Gastrocnemius medialis (tissue), 4 donors: ENCODE measurements at regions of chr1 and their contacts with region 1.

Region 1: DNA sequence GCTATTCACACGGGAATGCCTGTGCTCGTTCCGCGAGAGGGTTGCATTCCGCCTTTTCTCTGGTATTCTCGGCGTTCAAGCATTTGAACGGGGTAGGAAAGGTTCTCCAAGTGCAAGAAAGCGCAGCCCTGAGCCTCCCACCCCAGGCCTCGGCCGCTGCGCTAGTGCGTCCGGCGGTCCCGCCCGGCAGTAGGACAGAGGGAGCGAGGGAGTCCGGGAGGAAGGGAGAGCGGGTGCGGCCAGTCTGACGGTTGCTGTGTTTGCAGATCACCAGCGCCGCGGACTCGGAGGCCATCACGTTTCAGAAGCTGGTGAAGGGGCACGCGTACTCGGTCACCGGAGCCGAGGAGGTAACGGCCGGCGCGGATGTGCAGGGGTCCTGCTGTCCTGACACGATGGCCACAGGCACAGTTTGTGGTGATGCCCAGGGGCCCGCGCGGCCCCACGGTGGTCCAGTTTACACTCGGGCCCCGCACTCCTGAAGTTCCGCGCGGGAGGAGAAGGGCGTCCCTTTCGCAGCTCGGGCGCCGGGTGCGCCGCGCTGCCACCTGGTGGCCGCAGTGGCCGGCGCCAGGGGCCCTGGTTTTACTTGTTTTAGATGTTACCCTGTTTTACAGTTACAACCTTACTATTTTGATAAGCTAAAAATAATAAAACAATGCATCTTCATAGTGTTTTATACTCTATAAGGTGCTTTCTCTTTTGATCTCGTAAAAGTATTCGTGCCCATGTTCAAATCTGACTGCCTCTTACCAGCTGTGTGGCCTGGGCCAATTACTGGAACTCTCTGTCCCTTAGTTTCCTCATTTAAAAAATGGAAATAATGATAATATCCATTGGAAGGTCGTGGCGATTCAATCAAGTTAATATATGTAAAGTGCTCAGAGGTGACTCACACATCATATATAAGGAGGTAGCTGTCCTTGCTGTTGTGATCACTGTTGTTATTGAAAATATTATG is 36.7 kb downstream of the CAPN2 start:
- DNase-seq: peak; percentile 9 to 41
- ATAC-seq: peak; percentile 81 to 83
- H3K4me3 ChIP-seq: peak overlapping the region; percentile 45 to 57 (median 46)
- H3K27ac ChIP-seq: peak overlapping the region; percentile 53 to 67 (median 57)
- H3K4me1 ChIP-seq: peaks cover 6 to 12% of the 10 kb centered on the region in 2 donors
- H3K27me3 ChIP-seq: no peaks in the 10 kb centered on the region
- CTCF ChIP-seq: peak; percentile 88 to 98 (median 94)
- POLR2A ChIP-seq: no peak

Region 2: GRCh38 chr1:223645903-223646302 is 103.2 kb before region 1 on chr1:
- in situ Hi-C with region 1: no loop called
- intact Hi-C with region 1: no loop called
- DNase-seq: no peak
- ATAC-seq: no peak
- H3K4me3 ChIP-seq: no peak overlapping the region
- H3K27ac ChIP-seq: no peak overlapping the region
- H3K4me1 ChIP-seq: peaks cover 11 to 13% of the 10 kb centered on the region in 2 donors
- H3K27me3 ChIP-seq: no peaks in the 10 kb centered on the region
- CTCF ChIP-seq: no peak
- POLR2A ChIP-seq: no peak

Region 3: DNA sequence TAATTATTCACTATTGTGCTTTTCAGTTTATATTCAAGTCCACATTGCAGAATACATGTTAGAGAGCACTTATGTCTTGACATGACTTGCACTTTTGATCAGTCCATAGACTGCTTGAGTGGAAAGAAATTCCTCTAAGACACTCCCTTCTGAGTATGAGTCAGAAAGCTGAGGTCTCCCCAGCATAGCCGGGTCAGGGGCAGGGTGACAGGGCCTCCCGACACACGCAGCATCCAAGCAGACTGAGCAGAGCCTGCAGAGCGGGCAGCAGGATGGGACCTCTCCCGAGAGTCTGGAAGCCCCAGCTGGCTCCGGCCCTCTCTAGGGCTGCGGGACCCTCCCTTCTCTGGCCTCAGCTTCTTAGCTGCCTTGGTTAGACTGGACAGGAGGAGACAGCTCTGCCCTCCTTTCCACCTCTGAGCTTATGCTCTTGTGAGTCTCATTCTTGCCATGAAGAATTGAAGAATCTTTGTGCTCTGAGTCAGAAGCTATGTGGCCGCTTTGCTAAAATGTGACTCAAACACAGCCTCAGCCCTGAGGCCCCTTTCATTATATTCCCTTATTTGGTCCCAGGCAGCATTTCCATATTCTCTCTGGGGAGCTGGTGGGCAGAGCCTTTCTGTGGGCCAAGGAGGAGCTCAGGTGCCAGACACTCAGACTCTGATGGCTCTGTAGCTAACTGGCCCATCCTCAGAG is 48.0 kb before region 1 on chr1:
- in situ Hi-C with region 1: loop called (anchors 5 to 10 kb)
- intact Hi-C with region 1: loop called (anchors 1 kb)
- DNase-seq: no peak
- ATAC-seq: peak in 1 of 2 donors; percentile 16
- H3K4me3 ChIP-seq: no peak overlapping the region
- H3K27ac ChIP-seq: peak overlapping the region in 3 of 4 donors; percentile 39 to 53 (median 50)
- H3K4me1 ChIP-seq: no peaks in the 10 kb centered on the region
- H3K27me3 ChIP-seq: no peaks in the 10 kb centered on the region
- CTCF ChIP-seq: no peak
- POLR2A ChIP-seq: no peak

Region 4: GRCh38 chr1:223712194-223712849 is 36.7 kb before region 1 on chr1 and contains the start of gene CAPN2:
- in situ Hi-C with region 1: no loop called
- intact Hi-C with region 1: loop called (anchors 1 kb)
- DNase-seq: peak; percentile 75 to 81
- ATAC-seq: peak; percentile 84 to 85
- H3K4me3 ChIP-seq: peak within 1 kb of the TSS; percentile 69 to 97 (median 90)
- H3K27ac ChIP-seq: peak within 1 kb of the TSS; percentile 84 to 96 (median 96)
- H3K4me1 ChIP-seq: peaks cover 41 to 47% of the 10 kb centered on the region in 2 donors
- H3K27me3 ChIP-seq: no peaks in the 10 kb centered on the region
- CTCF ChIP-seq: peak; percentile 73 to 96 (median 91)
- POLR2A ChIP-seq: peak; percentile 81 to 89
- total RNA-seq, gene CAPN2: 42.6 to 141 (median 89.4) TPM